Activated T-helper 2 cell treated with anti-CD3 and anti-CD28 coated beads, Interferon-gamma antibody, Interleukin-2, Interleukin-4, amounts not matched to agents 10 μg/mL and 5 μg/mL and 100 μg/mL, durations not matched to agents 14 hours and 24 hours and 36 hours (primary cell): ENCODE measurements at regions of chr4 and their contacts with region 1.

Region 1: GRCh38 chr4:165612936-165613335 is 234.1 kb downstream of the CPE start:
- DNase-seq: peak; percentile 11
- H3K4me3 Mint-ChIP-seq: no peak overlapping the region
- H3K27ac Mint-ChIP-seq: no peak overlapping the region
- H3K4me1 Mint-ChIP-seq: peaks cover 12% of the 10 kb centered on the region
- H3K27me3 Mint-ChIP-seq: no peaks in the 10 kb centered on the region

Region 2: GRCh38 chr4:165190591-165191347 is 422.2 kb before region 1 on chr4:
- intact Hi-C with region 1: no loop called
- DNase-seq: no peak
- H3K4me3 Mint-ChIP-seq: no peak overlapping the region
- H3K27ac Mint-ChIP-seq: peak overlapping the region; percentile 51
- H3K4me1 Mint-ChIP-seq: peaks cover 30% of the 10 kb centered on the region
- H3K27me3 Mint-ChIP-seq: no peaks in the 10 kb centered on the region

Region 3: GRCh38 chr4:165569031-165569430 is 43.9 kb before region 1 on chr4:
- intact Hi-C with region 1: loop called (anchors 1 kb)
- DNase-seq: no peak
- H3K4me3 Mint-ChIP-seq: no peak overlapping the region
- H3K27ac Mint-ChIP-seq: no peak overlapping the region
- H3K4me1 Mint-ChIP-seq: peaks cover 2% of the 10 kb centered on the region
- H3K27me3 Mint-ChIP-seq: no peaks in the 10 kb centered on the region